ENCODE measurements at regions of chr3 and their contacts with region 1.

Region 1: GRCh38 chr3:28241221-28242160 is at the start of gene CMC1:
- DNase-seq: peak; percentile 99
- total RNA-seq, gene CMC1: 22.3 TPM

Region 2: GRCh38 chr3:27767000-27767399 is 474.5 kb before region 1 on chr3:
- intact Hi-C with region 1: no loop called
- DNase-seq: no peak

Region 3: DNA sequence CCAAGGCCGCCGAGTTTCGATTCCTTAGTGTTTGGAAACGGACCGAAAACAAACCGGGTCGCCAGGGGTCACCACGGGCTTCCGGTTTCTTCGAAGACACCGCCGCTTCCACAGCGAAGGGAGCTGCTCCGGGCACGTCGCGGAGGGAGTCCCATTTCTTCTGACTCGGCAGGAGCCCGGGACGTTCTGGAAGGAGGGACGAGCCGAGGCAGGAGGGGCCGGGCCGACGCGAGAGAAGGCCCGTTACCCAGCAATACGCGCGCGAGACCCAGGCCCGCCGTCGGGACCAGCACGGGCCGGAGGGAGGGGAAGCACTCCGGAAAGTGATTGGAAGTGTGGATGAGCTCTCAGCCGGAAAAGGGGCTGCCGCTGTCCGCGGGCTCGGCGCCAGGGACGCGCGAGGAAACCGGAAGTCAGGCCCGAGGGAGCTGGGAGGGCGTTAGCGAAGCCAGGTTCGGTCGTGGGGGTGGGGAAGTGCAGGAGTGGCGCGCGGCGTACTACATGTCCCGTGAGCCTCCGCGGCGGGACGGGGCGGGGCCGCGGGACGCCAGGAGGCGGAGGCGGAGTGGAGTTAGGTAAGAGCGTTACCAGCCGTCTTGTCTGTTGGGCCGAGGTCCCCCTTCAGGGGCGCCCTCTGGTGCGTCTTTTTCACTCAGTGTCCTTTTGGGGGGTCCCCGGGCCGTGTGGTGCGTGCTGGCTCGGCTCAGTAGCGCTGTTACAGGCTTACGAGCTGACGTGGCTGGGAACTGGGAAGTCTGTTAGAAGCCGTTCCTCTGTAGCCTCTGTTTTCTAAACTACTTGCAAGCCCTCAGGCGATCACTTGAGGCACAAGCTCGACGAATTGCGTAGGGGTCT is 107.4 kb after region 1 on chr3 and contains the starts of genes AZI2 and ZCWPW2:
- intact Hi-C with region 1: loop called (anchors 5 kb)
- DNase-seq: peak; percentile 97
- total RNA-seq, gene AZI2: 38.3 TPM
- total RNA-seq, gene ZCWPW2: 2.1 TPM

Measured in cardiac septum (tissue), 1 donor.